Activated naive CD4-positive, alpha-beta T cell treated with anti-CD3 and anti-CD28 coated beads for 36 hours (primary cell): ENCODE measurements at regions of chr12 and their contacts with region 1.

Region 1: GRCh38 chr12:68331869-68332727 is at the start of gene MDM1:
- DNase-seq: peak; percentile 96
- H3K4me3 Mint-ChIP-seq: peak within 1 kb of the TSS; percentile 84
- H3K27ac Mint-ChIP-seq: peak within 1 kb of the TSS; percentile 73
- H3K4me1 Mint-ChIP-seq: peaks cover 47% of the 10 kb centered on the region
- H3K27me3 Mint-ChIP-seq: no peaks in the 10 kb centered on the region
- total RNA-seq, gene MDM1: 16.5 to 20.8 TPM

Region 2: DNA sequence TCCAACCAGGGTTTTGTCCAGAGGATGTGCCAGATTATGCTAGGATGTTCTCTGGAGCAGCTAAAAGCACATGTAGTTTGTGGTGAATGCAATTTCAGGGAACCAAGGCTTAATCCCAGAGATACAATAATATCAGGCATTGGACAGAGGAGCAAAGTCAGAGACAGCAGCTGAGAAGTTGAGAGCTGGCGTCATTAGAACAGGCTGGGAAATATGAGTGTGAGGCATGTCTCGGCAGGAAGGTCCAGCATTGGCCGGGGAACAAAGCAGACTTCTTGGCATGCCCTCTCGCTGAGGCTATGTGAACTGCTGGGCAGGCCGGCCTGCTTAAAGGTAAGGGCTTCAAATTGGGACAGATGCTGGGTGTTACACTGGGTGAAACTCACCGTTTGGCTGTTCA is 937.5 kb before region 1 on chr12:
- CTCF ChIA-PET with region 1: no interaction called
- intact Hi-C with region 1: no loop called
- DNase-seq: no peak
- H3K4me3 Mint-ChIP-seq: no peak overlapping the region
- H3K27ac Mint-ChIP-seq: no peak overlapping the region
- H3K4me1 Mint-ChIP-seq: no peaks in the 10 kb centered on the region
- H3K27me3 Mint-ChIP-seq: no peaks in the 10 kb centered on the region

Region 3: DNA sequence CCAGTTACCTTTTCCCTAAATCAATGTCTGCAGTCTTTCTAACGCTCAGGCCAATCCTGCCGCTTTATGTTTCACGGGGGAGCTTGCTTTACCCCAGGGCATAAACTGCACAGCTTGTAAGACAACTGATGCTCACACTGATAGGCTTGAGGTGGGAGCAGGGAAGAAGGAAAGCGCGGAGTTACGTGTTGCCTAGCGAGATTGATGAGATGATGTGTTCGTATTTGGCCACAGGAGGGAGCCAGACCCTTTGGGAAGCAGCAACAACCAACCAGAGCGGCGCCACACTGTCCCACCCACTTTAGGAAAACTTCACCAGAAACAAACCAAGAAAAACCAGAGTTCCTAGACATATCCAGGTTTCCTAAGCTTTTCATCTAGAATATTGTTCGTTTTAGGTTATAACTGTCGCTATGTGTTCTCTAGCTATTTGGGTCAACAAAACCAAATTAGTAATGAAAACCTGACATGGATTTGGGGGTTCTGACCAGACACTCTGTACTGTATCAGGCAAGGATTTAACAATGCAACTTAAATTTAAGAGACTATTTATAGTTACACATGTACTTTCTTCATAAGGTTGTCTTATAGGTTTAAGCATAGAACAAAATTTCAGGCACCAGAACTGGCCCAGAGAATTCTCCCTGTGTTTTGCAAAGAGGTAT is 108.9 kb before region 1 on chr12:
- CTCF ChIA-PET with region 1: interaction called, 7 read pairs
- intact Hi-C with region 1: loop called (anchors 5 kb)
- DNase-seq: peak; percentile 88
- H3K4me3 Mint-ChIP-seq: peak overlapping the region; percentile 46
- H3K27ac Mint-ChIP-seq: no peak overlapping the region
- H3K4me1 Mint-ChIP-seq: peaks cover 6% of the 10 kb centered on the region
- H3K27me3 Mint-ChIP-seq: no peaks in the 10 kb centered on the region

Region 4: GRCh38 chr12:68364893-68365725 is 33.0 kb after region 1 on chr12:
- CTCF ChIA-PET with region 1: interaction called, 3 read pairs
- intact Hi-C with region 1: loop called (anchors 1 kb)
- DNase-seq: peak; percentile 90
- H3K4me3 Mint-ChIP-seq: peak overlapping the region; percentile 79
- H3K27ac Mint-ChIP-seq: peak overlapping the region; percentile 90
- H3K4me1 Mint-ChIP-seq: peaks cover 57% of the 10 kb centered on the region
- H3K27me3 Mint-ChIP-seq: no peaks in the 10 kb centered on the region

Region 5: GRCh38 chr12:68559984-68560850 is 228.1 kb after region 1 on chr12:
- CTCF ChIA-PET with region 1: no interaction called
- intact Hi-C with region 1: no loop called
- DNase-seq: peak; percentile 17
- H3K4me3 Mint-ChIP-seq: no peak overlapping the region
- H3K27ac Mint-ChIP-seq: no peak overlapping the region
- H3K4me1 Mint-ChIP-seq: peaks cover 43% of the 10 kb centered on the region
- H3K27me3 Mint-ChIP-seq: no peaks in the 10 kb centered on the region

Region 6: DNA sequence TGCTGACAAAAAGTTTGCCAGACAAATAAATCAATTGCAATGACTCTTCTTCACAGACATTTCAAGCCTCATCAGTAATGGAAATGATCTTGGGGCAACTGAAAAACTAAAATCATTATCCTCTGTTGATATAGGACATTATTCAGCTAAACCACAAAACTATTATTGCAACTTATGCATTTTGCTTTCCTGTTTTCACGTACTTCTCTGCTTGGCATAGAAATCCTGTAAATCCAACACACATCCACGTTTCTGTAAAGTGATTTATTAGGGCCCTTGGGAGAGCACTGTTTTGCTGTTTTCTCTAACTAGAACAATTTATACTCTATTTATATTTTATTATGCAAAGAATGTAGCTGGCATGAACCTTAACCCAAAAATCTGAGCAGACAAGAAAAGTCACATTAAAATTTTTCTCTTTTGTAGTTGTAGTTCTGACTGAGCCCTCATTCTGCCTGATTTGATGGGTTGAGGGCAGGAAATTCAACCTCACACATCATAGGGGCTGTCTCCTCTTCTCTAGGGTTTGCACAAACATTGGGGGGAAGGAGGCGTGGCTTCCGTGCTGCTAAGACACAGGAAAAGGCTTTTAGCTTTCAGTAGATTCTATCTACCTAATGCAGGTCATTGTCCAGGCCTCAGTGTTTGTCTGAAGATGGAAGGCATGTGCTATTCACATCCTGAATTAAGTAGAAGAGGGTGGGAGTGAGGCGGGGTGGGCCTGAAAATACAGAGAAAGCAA is 343.2 kb after region 1 on chr12:
- CTCF ChIA-PET with region 1: no interaction called
- intact Hi-C with region 1: loop called (anchors 1 kb)
- DNase-seq: peak; percentile 85
- H3K4me3 Mint-ChIP-seq: peak overlapping the region; percentile 29
- H3K27ac Mint-ChIP-seq: peak overlapping the region; percentile 85
- H3K4me1 Mint-ChIP-seq: peaks cover 52% of the 10 kb centered on the region
- H3K27me3 Mint-ChIP-seq: no peaks in the 10 kb centered on the region

Region 7: DNA sequence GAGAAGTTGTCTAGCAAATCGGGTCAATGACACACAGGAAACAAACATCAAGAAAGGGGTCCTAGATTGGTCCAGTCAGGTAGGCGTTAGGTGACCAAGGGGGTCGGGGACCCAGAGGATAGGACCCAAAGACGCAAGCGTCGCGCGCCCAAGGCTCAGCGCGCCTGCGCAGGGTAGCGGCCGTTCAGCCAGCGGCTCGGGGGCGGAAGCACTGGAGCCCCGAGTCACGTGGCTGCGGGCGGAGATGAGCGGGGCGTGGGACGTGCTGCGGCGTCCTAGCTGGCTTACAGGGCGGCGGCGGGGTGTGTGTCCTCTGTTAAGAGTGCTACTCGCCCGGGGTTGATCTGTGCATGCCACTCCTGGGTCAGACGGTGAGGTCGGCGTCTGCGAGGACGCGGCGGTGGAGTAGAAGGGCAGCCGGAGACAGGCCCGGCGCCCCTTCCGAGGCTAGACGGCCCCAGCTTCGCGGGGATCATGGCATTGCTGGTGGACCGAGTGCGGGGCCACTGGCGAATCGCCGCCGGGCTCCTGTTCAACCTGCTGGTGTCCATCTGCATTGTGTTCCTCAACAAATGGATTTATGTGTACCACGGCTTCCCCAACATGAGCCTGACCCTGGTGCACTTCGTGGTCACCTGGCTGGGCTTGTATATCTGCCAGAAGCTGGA is 413.9 kb after region 1 on chr12 and contains the start of gene SLC35E3:
- CTCF ChIA-PET with region 1: interaction called, 3 read pairs
- intact Hi-C with region 1: loop called (anchors 1 kb)
- DNase-seq: peak; percentile 93
- H3K4me3 Mint-ChIP-seq: peak within 1 kb of the TSS; percentile 95
- H3K27ac Mint-ChIP-seq: peak within 1 kb of the TSS; percentile 74
- H3K4me1 Mint-ChIP-seq: peaks cover 22% of the 10 kb centered on the region
- H3K27me3 Mint-ChIP-seq: no peaks in the 10 kb centered on the region
- total RNA-seq, gene SLC35E3: 2.8 to 3.1 TPM

Region 8: GRCh38 chr12:68807576-68808387 is 475.7 kb after region 1 on chr12 and contains the start of gene MDM2:
- CTCF ChIA-PET with region 1: no interaction called
- intact Hi-C with region 1: loop called (anchors 1 kb)
- DNase-seq: peak; percentile 95
- H3K4me3 Mint-ChIP-seq: peak within 1 kb of the TSS; percentile 97
- H3K27ac Mint-ChIP-seq: peak within 1 kb of the TSS; percentile 98
- H3K4me1 Mint-ChIP-seq: peaks cover 24% of the 10 kb centered on the region
- H3K27me3 Mint-ChIP-seq: no peaks in the 10 kb centered on the region
- total RNA-seq, gene MDM2: 165 to 166 TPM

Region 9: GRCh38 chr12:69239352-69239921 is 907.3 kb after region 1 on chr12 and contains the start of gene CPSF6:
- CTCF ChIA-PET with region 1: no interaction called
- intact Hi-C with region 1: loop called (anchors 10 kb)
- DNase-seq: peak; percentile 97
- H3K4me3 Mint-ChIP-seq: peak within 1 kb of the TSS; percentile 91
- H3K27ac Mint-ChIP-seq: peak within 1 kb of the TSS; percentile 98
- H3K4me1 Mint-ChIP-seq: peaks cover 47% of the 10 kb centered on the region
- H3K27me3 Mint-ChIP-seq: no peaks in the 10 kb centered on the region
- total RNA-seq, gene CPSF6: 73.7 to 75.7 TPM